Psoas muscle (tissue), 8 donors: ENCODE measurements at regions of chr9 and their contacts with region 1.

Region 1: GRCh38 chr9:13915591-13916326 is 398.2 kb downstream of the NFIB start:
- DNase-seq: no peak
- ATAC-seq: peak in 2 of 4 donors; percentile 17 to 32
- H3K4me3 ChIP-seq: no peak overlapping the region
- H3K27ac ChIP-seq: no peak overlapping the region
- H3K4me1 ChIP-seq: peaks cover 14% of the 10 kb centered on the region
- H3K27me3 ChIP-seq: no peaks in the 10 kb centered on the region
- CTCF ChIP-seq: no peak

Region 2: DNA sequence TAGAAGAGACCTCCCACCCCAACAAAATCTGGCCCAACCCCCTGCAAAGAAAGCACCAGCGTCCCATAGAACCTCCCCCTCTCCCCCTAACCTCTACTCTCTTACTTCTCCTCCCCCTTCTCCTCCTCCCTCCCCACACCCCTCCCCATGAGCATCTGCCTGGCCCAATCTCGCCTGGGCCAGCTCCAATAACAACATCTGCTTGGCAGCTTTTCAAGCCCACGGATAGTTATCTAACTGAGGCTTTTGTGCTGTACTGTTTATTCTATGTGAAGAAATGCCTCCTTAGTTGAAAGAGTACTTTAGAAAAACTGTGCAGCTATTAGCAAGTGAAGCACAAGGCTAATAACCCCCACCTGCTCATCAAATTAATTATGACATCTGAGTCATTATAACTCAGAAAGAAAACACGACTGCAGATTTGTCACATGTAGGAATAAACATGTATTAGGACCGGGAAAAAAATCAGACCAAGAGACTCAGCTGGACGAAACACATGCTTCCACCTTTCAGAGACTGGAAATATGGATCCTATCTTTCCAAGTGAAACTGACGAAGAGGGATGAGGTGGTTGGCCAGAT is 355.4 kb after region 1 on chr9:
- intact Hi-C with region 1: no loop called
- DNase-seq: peak; percentile 48 to 68
- ATAC-seq: peak in 3 of 4 donors; percentile 44 to 53 (median 51)
- H3K4me3 ChIP-seq: peak overlapping the region; percentile 54
- H3K27ac ChIP-seq: peak overlapping the region; percentile 68
- H3K4me1 ChIP-seq: peaks cover 73% of the 10 kb centered on the region
- H3K27me3 ChIP-seq: no peaks in the 10 kb centered on the region
- CTCF ChIP-seq: no peak

Region 3: DNA sequence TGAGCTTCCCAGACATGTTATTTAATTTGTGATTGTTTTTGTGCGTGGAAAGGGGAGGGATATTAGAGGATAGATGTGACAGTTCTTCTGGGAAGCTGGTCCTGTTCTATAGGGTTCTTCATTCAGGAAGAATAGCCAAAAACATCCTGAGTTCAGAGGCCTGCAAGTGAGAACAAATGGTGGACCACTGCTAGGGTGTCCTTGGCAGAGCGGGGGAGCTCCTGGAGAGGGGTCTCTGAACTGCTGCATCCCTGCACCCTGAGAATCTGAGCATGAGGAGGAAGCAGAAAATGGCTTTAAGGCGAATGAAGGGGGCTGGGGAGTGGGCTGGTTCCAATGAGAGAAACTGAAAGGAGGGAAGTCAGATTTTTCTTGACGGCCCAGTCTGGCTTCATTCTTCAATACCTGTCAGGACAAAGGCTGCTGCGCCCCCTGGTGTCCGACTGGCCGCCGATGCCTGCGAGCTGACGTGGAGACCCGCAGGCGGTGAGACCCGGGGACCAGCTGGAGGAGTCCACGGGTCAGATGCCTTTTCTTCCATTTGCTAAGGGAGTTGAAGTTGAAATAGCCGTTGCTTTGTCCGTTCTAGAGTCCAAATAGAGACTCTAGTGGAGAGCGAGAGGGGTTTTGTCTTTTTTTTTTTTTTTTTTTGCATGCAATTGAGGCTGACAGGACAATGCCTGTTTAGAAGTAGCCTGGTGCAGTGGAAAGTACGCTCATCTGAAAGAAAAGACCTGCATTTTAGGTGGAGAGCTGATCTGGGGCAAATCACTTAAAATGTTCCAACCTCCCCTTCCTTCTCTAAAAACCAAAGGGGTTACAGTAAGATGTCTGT is 437.7 kb after region 1 on chr9:
- intact Hi-C with region 1: loop called in 1 of 2 experiments (anchors 10 kb)
- DNase-seq: peak; percentile 95 to 96
- ATAC-seq: peak; percentile 72 to 80 (median 77)
- H3K4me3 ChIP-seq: peak overlapping the region; percentile 38
- H3K27ac ChIP-seq: peak overlapping the region; percentile 59
- H3K4me1 ChIP-seq: peaks cover 23% of the 10 kb centered on the region
- H3K27me3 ChIP-seq: no peaks in the 10 kb centered on the region
- CTCF ChIP-seq: peak; percentile 94